Sigmoid colon (tissue), 7 donors: ENCODE measurements at regions of chr4 and their contacts with region 1.

Region 1: GRCh38 chr4:123649645-123650391 is 253.2 kb downstream of the SPRY1 start:
- DNase-seq: peak; percentile 75
- H3K4me3 ChIP-seq: peak overlapping the region in 1 of 4 donors; percentile 1
- H3K27ac ChIP-seq: peak overlapping the region; percentile 45 to 75 (median 70)
- H3K4me1 ChIP-seq: peaks cover 0 to 42% (median 40%) of the 10 kb centered on the region in 4 donors
- H3K27me3 ChIP-seq: no peaks in the 10 kb centered on the region
- CTCF ChIP-seq: no peak
- EP300 ChIP-seq: peak in 1 of 4 donors; percentile 59
- POLR2A ChIP-seq: no peak

Region 2: GRCh38 chr4:123083646-123084045 is 566.2 kb before region 1 on chr4:
- intact Hi-C with region 1: no loop called
- DNase-seq: no peak
- H3K4me3 ChIP-seq: no peak overlapping the region
- H3K27ac ChIP-seq: no peak overlapping the region
- H3K4me1 ChIP-seq: no peaks in the 10 kb centered on the region
- H3K27me3 ChIP-seq: no peaks in the 10 kb centered on the region
- CTCF ChIP-seq: no peak
- EP300 ChIP-seq: no peak
- POLR2A ChIP-seq: no peak

Region 3: DNA sequence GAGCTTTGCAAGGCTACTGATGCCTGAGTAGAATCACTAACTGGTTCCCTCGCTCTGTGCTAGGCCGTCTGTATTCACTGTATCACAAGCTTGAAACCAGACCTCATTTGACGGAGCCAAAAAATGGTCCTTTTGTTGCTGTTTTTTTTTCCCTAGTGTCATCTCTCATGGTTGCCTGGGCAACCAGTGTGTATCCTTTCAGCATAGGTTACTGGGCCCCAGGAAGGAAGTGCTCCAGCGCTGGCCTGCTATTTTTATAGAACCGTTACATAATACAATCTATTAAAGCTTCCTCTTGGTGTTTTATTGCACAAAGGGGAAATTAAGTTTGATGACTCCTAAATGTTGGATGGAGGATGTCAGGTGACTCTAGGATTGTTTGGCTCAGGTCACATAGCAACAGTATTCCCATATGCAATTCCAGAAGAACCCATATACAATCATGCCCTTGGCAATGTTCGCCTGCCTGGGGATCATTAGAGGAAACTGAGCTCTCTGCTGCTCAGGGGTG is 32.8 kb before region 1 on chr4:
- intact Hi-C with region 1: no loop called
- DNase-seq: peak; percentile 92
- H3K4me3 ChIP-seq: no peak overlapping the region
- H3K27ac ChIP-seq: peak overlapping the region; percentile 48 to 71 (median 56)
- H3K4me1 ChIP-seq: peaks cover 0 to 51% (median 28%) of the 10 kb centered on the region in 4 donors
- H3K27me3 ChIP-seq: no peaks in the 10 kb centered on the region
- CTCF ChIP-seq: no peak
- EP300 ChIP-seq: peak in 3 of 4 donors; percentile 26 to 29 (median 29)
- POLR2A ChIP-seq: no peak

Region 4: GRCh38 chr4:123661080-123661737 is 11.4 kb after region 1 on chr4:
- intact Hi-C with region 1: no loop called
- DNase-seq: no peak
- H3K4me3 ChIP-seq: no peak overlapping the region
- H3K27ac ChIP-seq: no peak overlapping the region
- H3K4me1 ChIP-seq: peaks cover 0 to 4% (median 0%) of the 10 kb centered on the region in 4 donors
- H3K27me3 ChIP-seq: no peaks in the 10 kb centered on the region
- CTCF ChIP-seq: peak in 3 of 4 experiments; percentile 18 to 36 (median 29)
- EP300 ChIP-seq: no peak
- POLR2A ChIP-seq: no peak

Region 5: GRCh38 chr4:124111922-124112321 is 462.1 kb after region 1 on chr4:
- intact Hi-C with region 1: loop called (anchors 10 kb)
- DNase-seq: no peak
- H3K4me3 ChIP-seq: no peak overlapping the region
- H3K27ac ChIP-seq: no peak overlapping the region
- H3K4me1 ChIP-seq: peaks cover 0 to 16% (median 4%) of the 10 kb centered on the region in 4 donors
- H3K27me3 ChIP-seq: no peaks in the 10 kb centered on the region
- CTCF ChIP-seq: peak; percentile 38 to 57 (median 47)
- EP300 ChIP-seq: peak in 1 of 4 donors; percentile 7
- POLR2A ChIP-seq: no peak

Region 6: DNA sequence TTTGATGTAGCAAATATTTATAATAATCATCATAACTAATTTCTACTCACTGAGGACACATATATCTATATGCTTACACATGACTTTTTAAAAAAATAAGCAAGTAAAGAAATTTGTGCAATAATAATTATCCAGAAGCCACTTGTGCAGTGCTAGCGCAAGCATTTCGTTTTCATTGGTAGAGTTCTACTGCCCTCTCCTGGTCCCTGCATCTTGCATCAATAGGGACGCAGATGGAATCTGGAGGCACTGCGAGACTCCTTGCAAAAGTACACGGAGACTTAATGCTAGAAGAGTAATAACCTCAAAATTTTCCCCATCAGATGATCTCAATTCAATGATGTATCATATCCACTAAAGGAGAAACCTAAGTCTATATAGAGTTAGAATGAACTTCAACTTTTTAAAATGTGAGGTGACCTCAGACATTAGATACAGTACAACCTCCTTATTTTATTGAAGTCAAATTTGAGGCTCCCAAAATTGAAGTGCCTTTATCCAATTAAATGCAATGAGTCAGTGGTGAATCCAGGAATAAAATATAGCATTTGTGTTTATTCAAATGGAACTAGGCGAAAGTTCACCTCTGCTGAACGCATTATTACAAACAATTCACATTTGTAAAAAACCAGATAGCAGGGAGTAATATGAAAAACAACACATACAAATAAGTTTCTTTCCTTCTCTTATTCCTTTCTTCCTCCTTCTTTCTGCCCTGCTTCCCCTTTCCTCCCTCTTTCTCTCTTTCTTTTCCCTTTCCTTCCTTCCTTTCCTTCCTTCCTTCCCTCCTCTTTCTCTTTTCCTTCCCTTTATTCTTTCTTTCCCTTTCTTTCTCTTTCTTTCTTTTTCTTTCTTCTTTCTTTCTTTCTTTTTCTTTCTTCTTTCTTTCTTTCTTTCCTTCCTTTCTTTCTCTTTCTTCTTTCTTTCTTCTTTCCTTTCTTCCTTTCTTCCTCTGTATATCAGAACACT is 612.7 kb after region 1 on chr4:
- intact Hi-C with region 1: loop called (anchors 10 kb)
- DNase-seq: peak; percentile 79
- H3K4me3 ChIP-seq: no peak overlapping the region
- H3K27ac ChIP-seq: no peak overlapping the region
- H3K4me1 ChIP-seq: peaks cover 0 to 10% (median 7%) of the 10 kb centered on the region in 4 donors
- H3K27me3 ChIP-seq: no peaks in the 10 kb centered on the region
- CTCF ChIP-seq: peak; percentile 60 to 83 (median 62)
- EP300 ChIP-seq: no peak
- POLR2A ChIP-seq: no peak